ENCODE measurements at regions of chr6 and their contacts with region 1.

Region 1: DNA sequence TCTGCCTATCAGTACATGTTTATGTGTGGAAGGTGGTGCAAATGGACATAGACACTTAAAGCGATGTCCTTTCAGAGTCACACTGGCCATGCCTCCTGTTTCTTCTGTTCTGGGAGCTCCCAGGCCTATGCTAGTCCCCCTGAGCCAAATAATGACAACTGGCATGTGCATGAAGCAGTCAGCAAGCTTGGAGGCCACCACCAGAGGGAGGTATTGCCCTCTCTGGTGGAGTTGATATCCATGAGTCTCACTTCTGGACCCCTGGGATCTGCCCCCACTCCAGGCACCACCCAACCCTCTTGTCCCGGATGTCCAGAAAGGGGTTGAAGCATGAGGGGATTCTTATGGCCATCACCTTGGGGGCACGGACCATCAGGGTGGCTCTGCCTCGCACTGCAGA is 172.2 kb downstream of the AIG1 start:
- H3K4me3 ChIP-seq: no peak overlapping the region
- H3K27ac ChIP-seq: no peak overlapping the region
- H3K4me1 ChIP-seq: no peaks in the 10 kb centered on the region
- CTCF ChIP-seq: no peak; the same call in 1 of the 2 replicates

Region 2: GRCh38 chr6:142313284-142313683 is 919.6 kb before region 1 on chr6:
- CTCF ChIA-PET with region 1: no interaction called
- POLR2A ChIA-PET with region 1: no interaction called
- H3K4me3 ChIP-seq: no peak overlapping the region
- H3K27ac ChIP-seq: no peak overlapping the region
- H3K4me1 ChIP-seq: no peaks in the 10 kb centered on the region; the same call in 1 of the 2 replicates
- CTCF ChIP-seq: no peak

Region 3: DNA sequence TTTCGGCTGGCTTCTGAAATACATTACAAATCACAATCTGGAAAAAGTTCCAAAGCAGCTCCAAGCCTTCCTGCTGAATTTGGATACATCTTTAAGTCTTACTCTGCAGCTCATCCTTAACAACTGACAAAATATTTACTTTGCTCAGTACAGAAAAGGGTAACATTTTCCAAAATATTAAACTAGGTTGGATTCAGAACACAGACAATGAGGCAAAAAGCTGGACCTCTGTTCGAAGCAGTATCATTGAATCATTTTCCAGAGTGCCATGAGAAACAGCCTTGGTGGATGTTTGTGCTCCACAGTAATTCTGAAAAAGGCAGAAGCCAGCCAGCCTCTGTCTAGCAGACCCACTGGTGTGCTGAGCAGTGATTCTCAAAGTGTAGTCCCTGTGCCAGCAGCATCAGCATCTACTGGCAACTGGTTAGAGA is 10.0 kb before region 1 on chr6:
- CTCF ChIA-PET with region 1: interaction called, 10 read pairs
- POLR2A ChIA-PET with region 1: no interaction called
- H3K4me3 ChIP-seq: no peak overlapping the region
- H3K27ac ChIP-seq: no peak overlapping the region
- H3K4me1 ChIP-seq: no peaks in the 10 kb centered on the region
- CTCF ChIP-seq: no peak

Region 4: GRCh38 chr6:143427109-143427817 is 194.4 kb after region 1 on chr6:
- CTCF ChIA-PET with region 1: interaction called, 54 read pairs
- POLR2A ChIA-PET with region 1: no interaction called
- H3K4me3 ChIP-seq: no peak overlapping the region
- H3K27ac ChIP-seq: no peak overlapping the region
- H3K4me1 ChIP-seq: no peaks in the 10 kb centered on the region
- CTCF ChIP-seq: peak; percentile 80

Measured in HEK293 (cell line).